Posterior cingulate gyrus (tissue), 11 donors: ENCODE measurements at regions of chr1 and their contacts with region 1.

Region 1: DNA sequence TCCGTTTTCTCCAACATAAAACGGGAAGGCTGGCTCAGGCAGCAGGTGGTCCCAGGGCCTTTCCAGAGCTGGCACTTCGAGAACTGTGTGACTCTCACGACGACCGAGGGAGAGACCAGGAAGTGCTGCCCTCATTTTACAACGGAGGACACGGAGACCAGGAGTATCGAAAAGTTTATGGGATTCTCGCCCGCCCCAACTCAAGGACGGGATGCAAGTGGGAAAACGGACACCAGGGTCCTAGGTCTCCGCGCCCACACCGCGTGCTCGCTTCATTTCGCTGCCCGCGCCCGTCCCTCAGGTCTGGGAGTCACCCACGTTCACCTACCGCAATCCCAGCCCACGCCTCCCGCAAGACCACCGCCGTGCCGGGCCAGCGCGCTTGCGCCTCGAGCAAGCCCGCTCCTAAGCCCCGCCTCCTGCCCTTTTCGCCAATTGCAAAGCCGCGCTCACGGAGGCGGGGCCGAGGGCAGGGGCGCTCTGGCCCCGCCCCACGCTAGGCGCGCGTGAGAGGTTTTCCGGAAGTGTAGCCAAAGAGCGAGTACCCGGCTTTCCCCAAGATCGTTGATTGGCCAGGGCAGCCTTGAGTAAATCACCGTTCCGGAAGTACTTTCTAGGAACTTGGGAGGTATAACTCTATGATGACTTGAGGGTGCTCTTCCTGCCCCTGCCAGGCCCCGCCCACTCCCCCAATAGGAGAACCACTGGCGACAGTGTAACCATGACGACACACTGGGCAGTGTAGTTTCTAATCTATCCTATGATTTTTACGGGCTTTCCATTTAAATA is at the start of gene PARS2:
- DNase-seq: peak; percentile 88 to 99 (median 94)

Region 2: DNA sequence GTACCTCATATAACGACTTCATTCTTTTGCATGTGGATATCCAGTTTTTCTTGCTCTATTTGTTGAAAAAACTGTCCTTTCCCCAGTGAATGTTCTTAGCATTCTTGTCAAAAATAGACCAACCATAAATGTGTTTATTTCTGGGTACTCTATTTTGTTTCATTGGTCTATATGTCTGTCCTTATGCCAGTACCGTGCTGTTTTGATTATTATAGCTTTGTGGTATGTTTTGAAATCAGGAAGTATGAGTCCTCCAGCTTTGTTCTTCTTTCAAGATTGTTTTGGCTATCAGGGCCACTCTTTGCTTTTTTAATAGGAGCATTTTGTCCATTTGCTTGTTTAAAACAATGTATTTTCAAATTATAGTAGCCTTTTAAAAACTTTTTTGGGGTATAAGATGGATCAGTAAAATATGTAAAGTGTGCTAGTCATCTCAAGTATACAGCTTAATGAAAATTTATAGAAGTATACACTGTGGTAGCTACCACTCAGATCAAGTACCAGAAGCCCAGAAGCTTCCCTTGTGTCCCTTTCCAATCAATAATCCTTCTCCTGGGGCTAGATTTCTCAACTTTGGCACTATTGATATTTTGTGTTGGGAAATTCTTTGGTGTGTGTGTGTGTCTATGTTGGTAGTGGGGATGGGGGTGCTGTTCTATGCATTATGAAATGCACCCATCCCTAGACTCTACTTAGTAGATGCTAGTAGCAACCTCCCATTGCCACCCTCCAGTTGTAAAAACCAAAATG is 106.0 kb before region 1 on chr1:
- intact Hi-C with region 1: no loop called
- DNase-seq: no peak

Region 3: DNA sequence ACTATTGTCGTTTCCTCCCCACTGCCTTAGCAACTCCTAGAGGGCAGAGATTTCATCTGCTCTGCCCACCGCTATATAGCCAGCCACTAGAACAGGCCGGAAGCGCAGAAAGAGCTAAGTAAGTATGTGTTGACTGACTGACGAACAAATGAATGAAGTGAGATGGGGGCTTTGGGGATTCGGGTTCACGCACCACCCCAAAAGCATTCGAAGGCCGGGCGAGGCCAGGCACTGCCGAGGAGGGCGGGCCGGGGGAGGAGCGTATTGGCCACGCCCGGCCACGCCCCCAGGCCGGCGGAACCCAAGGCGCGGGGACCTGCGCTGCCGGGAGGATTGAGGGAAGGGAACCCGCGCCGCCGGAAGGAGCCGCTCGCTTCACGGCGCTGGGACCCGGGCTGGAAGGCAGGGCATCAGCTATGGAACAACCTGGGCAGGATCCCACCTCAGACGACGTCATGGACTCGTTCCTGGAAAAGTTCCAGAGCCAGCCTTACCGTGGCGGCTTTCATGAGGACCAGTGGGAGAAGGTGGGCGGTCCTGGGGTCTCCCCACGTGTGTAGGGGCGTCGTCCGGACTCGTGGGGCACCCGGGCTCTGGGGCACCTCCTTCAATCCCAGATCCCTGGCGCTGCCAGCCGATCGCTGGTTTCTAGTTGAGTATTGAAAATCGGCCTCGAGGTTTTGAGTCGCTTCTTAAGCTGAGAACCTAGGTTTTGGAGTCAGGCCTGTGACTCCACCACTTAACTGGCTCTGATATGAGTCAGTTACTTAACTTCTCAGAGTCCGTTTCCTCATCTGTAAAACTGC is 48.6 kb before region 1 on chr1 and contains the start of gene TTC4:
- intact Hi-C with region 1: loop called (anchors 2 kb)
- DNase-seq: peak; percentile 76 to 98 (median 86)

Region 4: GRCh38 chr1:54886724-54887664 is 122.7 kb after region 1 on chr1 and contains the start of gene DHCR24:
- intact Hi-C with region 1: loop called (anchors 10 kb)
- DNase-seq: peak; percentile 87 to 99 (median 94)

Region 5: GRCh38 chr1:54950369-54951163 is 186.2 kb after region 1 on chr1:
- intact Hi-C with region 1: no loop called
- DNase-seq: peak in 8 of 10 donors; percentile 45 to 92 (median 80)